ENCODE measurements at regions of chr5 and their contacts with region 1.

Region 1: DNA sequence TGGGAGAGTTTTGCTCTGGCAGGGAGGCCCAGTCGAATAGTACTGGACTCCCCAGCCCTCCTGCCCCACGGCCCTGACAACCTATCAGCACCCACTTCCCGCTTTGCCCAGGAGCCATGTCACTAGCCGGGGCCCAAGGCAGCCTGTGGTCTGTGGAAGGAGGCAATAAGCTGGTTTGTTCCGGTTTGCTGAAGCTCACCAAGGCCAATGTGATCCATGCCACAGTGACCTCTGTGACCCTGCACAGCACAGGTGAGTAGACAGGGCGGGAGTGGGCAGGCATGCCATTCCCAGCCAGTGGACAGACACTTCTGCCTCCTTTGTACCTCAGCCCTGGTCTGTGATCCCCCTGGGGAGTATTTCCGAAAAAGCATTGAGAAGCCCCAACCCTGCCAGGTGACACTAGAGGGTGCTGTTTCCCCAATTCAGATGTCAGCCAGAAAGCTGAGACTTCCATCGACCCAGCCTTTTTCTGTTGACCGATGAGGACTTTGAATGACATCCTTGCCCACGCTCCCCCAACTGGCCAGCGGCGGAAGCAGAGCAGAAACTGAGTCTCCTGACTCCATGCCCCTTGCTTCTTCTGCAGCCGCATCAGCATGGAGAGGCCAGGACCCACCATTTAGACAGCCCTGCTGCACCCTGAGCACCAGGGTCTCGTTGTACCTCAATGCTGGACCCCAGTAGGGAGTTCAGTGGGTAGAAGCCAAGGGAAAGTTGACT is 9.6 kb downstream of the PCYOX1L start:
- DNase-seq: peak; percentile 66
- ATAC-seq: peak; percentile 72
- H3K4me3 Mint-ChIP-seq: no peak overlapping the region
- H3K27ac Mint-ChIP-seq: no peak overlapping the region
- H3K4me1 Mint-ChIP-seq: peaks cover 6% of the 10 kb centered on the region
- H3K27me3 Mint-ChIP-seq: no peaks in the 10 kb centered on the region

Region 2: GRCh38 chr5:148875205-148875875 is 492.1 kb before region 1 on chr5:
- CTCF ChIA-PET with region 1: no interaction called
- DNase-seq: no peak
- ATAC-seq: no peak
- H3K4me3 Mint-ChIP-seq: no peak overlapping the region
- H3K27ac Mint-ChIP-seq: no peak overlapping the region
- H3K4me1 Mint-ChIP-seq: no peaks in the 10 kb centered on the region
- H3K27me3 Mint-ChIP-seq: peaks cover 4% of the 10 kb centered on the region

Region 3: DNA sequence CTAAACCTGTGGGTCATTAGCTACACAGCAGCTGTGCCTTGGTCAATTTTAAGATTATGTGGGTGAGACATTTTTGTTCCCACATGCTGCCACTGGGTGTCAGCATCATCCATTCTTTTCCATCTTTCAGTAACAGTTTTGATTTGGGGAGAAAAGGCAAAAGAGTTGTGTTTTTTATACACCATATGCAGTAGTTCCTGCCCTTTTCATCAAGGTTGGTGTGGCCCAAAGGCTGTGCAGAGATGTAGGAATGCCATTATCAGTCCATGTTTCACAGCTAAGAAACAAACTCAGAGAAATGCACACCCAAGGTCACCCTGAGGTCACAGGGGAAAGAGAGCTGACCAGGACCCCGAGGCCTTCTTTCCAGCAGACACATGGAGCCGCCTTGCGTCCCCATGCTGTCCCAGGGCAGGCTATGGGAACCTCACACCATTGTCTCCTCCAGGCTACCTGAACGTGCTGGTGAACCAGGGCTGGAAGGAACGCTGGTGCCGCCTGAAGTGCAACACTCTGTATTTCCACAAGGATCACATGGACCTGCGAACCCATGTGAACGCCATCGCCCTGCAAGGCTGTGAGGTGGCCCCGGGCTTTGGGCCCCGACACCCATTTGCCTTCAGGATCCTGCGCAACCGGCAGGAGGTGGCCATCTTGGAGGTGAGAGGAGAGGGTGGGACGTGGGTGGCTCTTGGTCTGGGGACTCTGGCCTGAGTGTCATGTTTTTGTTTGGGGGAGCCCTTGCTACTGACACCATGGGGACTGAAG is 49.9 kb before region 1 on chr5:
- CTCF ChIA-PET with region 1: interaction called, 245 read pairs
- DNase-seq: no peak
- ATAC-seq: peak; percentile 64
- H3K4me3 Mint-ChIP-seq: no peak overlapping the region
- H3K27ac Mint-ChIP-seq: no peak overlapping the region
- H3K4me1 Mint-ChIP-seq: peaks cover 3% of the 10 kb centered on the region
- H3K27me3 Mint-ChIP-seq: no peaks in the 10 kb centered on the region

Region 4: DNA sequence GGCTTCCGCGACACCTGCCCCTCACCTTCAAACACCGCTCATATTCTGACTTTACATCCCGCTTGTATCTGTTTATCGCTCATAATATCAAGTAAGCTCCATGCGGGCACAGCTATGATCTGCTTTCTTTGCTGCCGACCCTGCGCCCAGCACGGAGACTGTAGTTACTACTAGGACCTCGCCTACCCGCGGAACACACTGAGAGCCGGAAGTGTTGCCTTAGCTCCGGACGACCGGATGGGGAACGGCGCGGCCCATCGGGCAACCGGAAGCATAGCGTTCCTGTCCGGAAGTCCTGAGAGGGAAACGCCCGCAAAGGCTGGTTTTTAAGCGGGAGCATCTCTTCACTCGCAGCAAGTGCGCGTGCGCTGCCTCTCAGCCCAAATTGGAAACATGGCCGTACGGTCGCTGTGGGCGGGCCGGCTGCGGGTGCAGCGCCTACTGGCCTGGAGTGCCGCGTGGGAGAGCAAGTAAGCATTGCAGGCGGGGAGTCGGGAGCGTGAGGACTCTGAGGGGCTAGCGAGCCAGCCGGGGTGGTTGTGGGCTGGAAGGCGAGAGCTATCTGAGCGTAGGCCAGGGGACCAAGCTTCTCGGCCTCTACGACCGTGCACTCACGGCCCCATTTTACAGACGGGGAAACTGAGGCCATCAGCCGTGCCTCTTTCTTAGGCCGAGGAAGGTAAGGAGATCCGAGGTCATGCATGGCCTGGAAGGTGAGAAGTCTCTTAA is 22.1 kb before region 1 on chr5 and contains the start of gene GRPEL2:
- CTCF ChIA-PET with region 1: interaction called, 107 read pairs
- DNase-seq: peak; percentile 96
- ATAC-seq: peak; percentile 86
- H3K4me3 Mint-ChIP-seq: peak within 1 kb of the TSS; percentile 84
- H3K27ac Mint-ChIP-seq: peak within 1 kb of the TSS; percentile 95
- H3K4me1 Mint-ChIP-seq: peaks cover 51% of the 10 kb centered on the region
- H3K27me3 Mint-ChIP-seq: no peaks in the 10 kb centered on the region
- total RNA-seq, gene GRPEL2: 27.2 to 27.3 TPM

Region 5: DNA sequence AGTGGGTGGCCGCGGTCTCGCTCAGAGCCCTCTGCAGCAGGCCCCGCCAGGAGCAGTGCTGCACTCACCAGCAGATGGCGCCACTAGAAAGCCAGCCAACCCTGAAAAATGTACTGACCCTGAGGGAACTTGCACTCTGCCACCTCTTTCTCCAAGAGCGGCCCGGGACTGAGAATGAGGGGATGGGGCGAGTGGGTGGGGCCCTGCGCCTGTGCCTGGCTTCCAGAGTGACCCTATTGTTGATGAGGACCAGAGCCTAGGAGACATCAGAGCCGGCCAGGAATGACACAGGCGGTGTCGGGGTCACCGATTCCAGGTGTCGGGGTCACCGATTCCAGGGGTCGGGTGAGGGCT is 14.6 kb after region 1 on chr5:
- CTCF ChIA-PET with region 1: interaction called, 22 read pairs
- DNase-seq: peak; percentile 77
- ATAC-seq: peak; percentile 86
- H3K4me3 Mint-ChIP-seq: no peak overlapping the region
- H3K27ac Mint-ChIP-seq: no peak overlapping the region
- H3K4me1 Mint-ChIP-seq: no peaks in the 10 kb centered on the region
- H3K27me3 Mint-ChIP-seq: no peaks in the 10 kb centered on the region

Region 6: GRCh38 chr5:149387081-149387631 is 19.7 kb after region 1 on chr5:
- CTCF ChIA-PET with region 1: interaction called, 22 read pairs
- DNase-seq: no peak
- ATAC-seq: no peak
- H3K4me3 Mint-ChIP-seq: no peak overlapping the region
- H3K27ac Mint-ChIP-seq: no peak overlapping the region
- H3K4me1 Mint-ChIP-seq: no peaks in the 10 kb centered on the region
- H3K27me3 Mint-ChIP-seq: peaks cover 12% of the 10 kb centered on the region

Region 7: GRCh38 chr5:149434162-149435014 is 67.0 kb after region 1 on chr5:
- CTCF ChIA-PET with region 1: interaction called, 24 read pairs
- DNase-seq: peak; percentile 62
- ATAC-seq: peak; percentile 53
- H3K4me3 Mint-ChIP-seq: no peak overlapping the region
- H3K27ac Mint-ChIP-seq: no peak overlapping the region
- H3K4me1 Mint-ChIP-seq: peaks cover 26% of the 10 kb centered on the region
- H3K27me3 Mint-ChIP-seq: peaks cover 10% of the 10 kb centered on the region

Region 8: GRCh38 chr5:149551200-149552037 is 184.0 kb after region 1 on chr5 and contains the start of gene CSNK1A1:
- CTCF ChIA-PET with region 1: interaction called, 13 read pairs
- DNase-seq: peak; percentile 99
- ATAC-seq: peak; percentile 94
- H3K4me3 Mint-ChIP-seq: peak within 1 kb of the TSS; percentile 96
- H3K27ac Mint-ChIP-seq: peak within 1 kb of the TSS; percentile 98
- H3K4me1 Mint-ChIP-seq: peaks cover 27% of the 10 kb centered on the region
- H3K27me3 Mint-ChIP-seq: no peaks in the 10 kb centered on the region
- total RNA-seq, gene CSNK1A1: 193 to 204 TPM